ENCODE measurements at regions of chr14 and their contacts with region 1.

Region 1: DNA sequence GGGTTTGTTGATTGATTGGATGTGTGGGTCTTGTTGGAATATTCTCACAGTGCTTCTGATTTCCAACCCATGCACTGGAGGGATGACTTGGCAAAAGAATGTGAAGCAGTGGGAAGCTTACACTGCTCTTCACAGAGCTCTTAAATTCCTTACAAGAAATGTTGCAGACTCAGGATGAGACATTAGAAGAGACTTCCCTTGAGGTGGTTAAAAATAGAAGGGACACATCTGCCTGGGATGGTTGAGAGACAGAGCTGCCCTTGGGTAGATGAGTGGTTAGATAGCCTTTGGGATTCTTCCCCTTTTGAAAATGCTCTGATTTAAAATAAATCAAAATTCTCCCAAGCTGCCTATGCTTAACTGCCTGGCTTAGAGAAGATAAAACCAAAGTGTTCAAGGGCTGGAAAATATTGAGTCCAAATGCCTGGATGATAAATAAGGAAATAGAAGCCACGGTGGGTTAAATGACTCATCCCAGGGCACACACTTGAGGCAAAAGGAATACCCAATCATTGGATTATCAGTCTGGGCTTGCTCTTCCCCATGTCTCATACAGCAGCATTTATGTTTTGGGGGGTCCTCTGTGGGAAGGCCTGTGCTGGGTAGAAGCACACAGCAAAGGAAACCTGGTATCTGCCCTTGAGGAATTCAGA is 264.3 kb downstream of the AKAP6 start:
- DNase-seq: no peak
- ATAC-seq: peak in 1 of 4 donors; percentile 14
- H3K4me3 ChIP-seq: no peak overlapping the region
- H3K27ac ChIP-seq: peak overlapping the region in 2 of 12 donors; percentile 9 to 26
- H3K4me1 ChIP-seq: peaks cover 0 to 36% (median 22%) of the 10 kb centered on the region in 12 donors
- H3K27me3 ChIP-seq: no peaks in the 10 kb centered on the region
- CTCF ChIP-seq: no peak
- POLR2A ChIP-seq: no peak

Region 2: DNA sequence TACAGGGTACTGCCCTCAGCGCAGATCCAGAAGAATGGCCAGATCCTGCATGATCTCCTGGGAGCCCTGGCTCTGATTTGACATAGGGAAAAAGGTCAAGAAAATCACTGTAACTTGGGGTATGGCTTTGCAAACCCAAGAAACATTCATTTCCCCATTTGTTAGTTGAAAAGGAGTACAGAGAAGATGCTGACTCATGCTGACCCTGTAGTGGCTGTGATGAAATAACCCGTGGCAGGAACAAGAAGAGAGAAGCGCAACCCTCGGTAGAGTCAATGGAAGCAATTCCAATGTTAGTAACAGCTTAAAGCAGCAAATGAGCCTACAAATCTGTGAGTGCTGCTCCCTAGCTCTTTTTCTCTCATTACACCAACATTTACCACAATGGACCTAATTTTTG is 63.7 kb after region 1 on chr14:
- intact Hi-C with region 1: loop called in 1 of 10 experiments (anchors 10 kb)
- DNase-seq: peak in 3 of 5 donors; percentile 15 to 32 (median 20)
- ATAC-seq: peak; percentile 43 to 89 (median 68)
- H3K4me3 ChIP-seq: no peak overlapping the region
- H3K27ac ChIP-seq: peak overlapping the region in 8 of 12 donors; percentile 0 to 75 (median 30)
- H3K4me1 ChIP-seq: peaks cover 0 to 37% (median 7%) of the 10 kb centered on the region in 12 donors
- H3K27me3 ChIP-seq: no peaks in the 10 kb centered on the region
- CTCF ChIP-seq: no peak
- POLR2A ChIP-seq: no peak